Activated CD8-positive, alpha-beta T cell treated with anti-CD3 and anti-CD28 coated beads, Interleukin-2, amount 10 ng/mL, durations not matched to agents 7 days and 5 days (primary cell): ENCODE measurements at regions of chr11 and their contacts with region 1.

Region 1: GRCh38 chr11:125592305-125593112 is at the start of gene STT3A:
- DNase-seq: peak; percentile 98
- ATAC-seq: peak; percentile 98
- H3K4me3 Mint-ChIP-seq: peak within 1 kb of the TSS; percentile 93
- H3K27ac Mint-ChIP-seq: peak within 1 kb of the TSS; percentile 96
- H3K4me1 Mint-ChIP-seq: peaks cover 34% of the 10 kb centered on the region
- H3K27me3 Mint-ChIP-seq: no peaks in the 10 kb centered on the region
- total RNA-seq, gene STT3A: 103 to 114 TPM

Region 2: DNA sequence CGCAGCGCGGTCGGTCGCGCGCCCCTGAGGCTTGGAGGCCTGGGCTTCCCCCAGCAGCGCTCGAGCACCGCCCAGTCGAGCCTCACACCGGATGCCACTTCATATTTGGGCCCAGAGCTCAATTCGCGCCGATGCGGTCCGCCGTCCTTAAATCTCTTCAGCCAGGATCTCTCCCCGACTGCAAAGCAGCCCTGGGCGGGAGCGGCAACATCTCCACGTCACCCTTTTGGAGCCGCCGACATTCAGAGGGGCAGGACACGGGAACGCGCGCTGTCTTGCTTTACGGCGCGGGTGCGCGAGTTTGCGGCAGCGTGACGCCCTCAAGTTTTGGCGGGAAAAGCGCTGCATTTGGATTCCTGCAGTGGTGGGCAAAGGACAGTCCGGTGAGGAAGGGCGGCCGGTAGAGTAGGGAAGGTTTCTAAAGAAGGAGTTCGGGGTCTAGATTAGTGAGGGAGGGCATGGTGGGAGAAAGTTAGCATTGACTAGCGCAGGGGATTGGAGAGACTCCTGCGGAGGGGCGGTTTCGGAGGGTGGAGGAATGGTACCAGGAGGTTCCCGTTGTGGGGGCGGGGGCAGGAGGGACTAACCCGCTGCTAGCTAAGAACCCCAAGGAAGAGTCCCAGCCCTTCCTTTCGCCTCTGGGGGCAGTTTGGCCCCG is 33.2 kb after region 1 on chr11:
- CTCF ChIA-PET with region 1: interaction called, 16 read pairs
- POLR2A ChIA-PET with region 1: interaction called, 32 read pairs
- DNase-seq: peak; percentile 91
- ATAC-seq: peak; percentile 90
- H3K4me3 Mint-ChIP-seq: peak overlapping the region; percentile 90
- H3K27ac Mint-ChIP-seq: peak overlapping the region; percentile 97
- H3K4me1 Mint-ChIP-seq: peaks cover 29% of the 10 kb centered on the region
- H3K27me3 Mint-ChIP-seq: no peaks in the 10 kb centered on the region

Region 3: DNA sequence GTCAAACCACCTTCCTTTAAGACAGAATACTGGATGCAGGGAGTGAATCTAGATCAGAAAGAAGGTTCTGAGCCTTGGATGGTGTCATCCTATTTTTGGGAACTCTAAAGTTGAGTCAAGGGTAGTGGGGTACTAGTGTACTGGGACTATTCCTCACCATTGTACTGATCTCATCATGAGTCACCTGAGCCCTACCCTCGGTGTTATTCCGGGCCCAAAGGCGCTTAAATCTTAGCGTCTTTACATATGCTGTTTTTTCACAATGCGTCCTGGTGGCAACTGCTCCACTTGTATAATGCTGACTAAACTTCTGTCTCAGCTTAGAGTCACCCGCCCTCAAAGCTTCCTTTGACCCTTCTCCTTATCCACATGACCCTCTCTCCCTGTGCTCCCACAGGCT is 128.3 kb after region 1 on chr11:
- CTCF ChIA-PET with region 1: no interaction called
- POLR2A ChIA-PET with region 1: no interaction called
- DNase-seq: no peak
- ATAC-seq: no peak
- H3K4me3 Mint-ChIP-seq: no peak overlapping the region
- H3K27ac Mint-ChIP-seq: no peak overlapping the region
- H3K4me1 Mint-ChIP-seq: no peaks in the 10 kb centered on the region
- H3K27me3 Mint-ChIP-seq: peaks cover 14% of the 10 kb centered on the region

Region 4: DNA sequence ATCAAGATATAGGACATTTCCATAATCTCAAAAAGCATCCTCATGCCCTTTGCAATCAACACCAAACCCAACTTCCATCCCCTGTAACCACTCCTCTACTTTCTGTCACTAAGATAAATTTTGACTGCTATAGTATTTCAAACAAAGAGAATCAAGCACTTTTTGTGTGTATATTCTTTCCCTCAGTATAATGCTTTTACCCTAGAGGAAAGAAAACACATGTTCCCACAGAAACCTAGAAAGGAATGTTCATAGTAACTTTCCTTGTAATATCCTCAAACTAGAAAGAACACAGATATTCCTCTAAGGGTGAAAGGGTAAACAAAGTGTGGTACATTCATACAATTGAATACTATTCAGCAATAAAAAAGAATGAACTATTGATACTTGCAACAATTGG is 148.1 kb after region 1 on chr11:
- CTCF ChIA-PET with region 1: no interaction called
- POLR2A ChIA-PET with region 1: no interaction called
- DNase-seq: no peak
- ATAC-seq: no peak
- H3K4me3 Mint-ChIP-seq: no peak overlapping the region
- H3K27ac Mint-ChIP-seq: no peak overlapping the region
- H3K4me1 Mint-ChIP-seq: no peaks in the 10 kb centered on the region
- H3K27me3 Mint-ChIP-seq: peaks cover 28% of the 10 kb centered on the region

Region 5: GRCh38 chr11:125772834-125773505 is 180.5 kb after region 1 on chr11:
- CTCF ChIA-PET with region 1: no interaction called
- POLR2A ChIA-PET with region 1: no interaction called
- DNase-seq: no peak
- ATAC-seq: no peak
- H3K4me3 Mint-ChIP-seq: no peak overlapping the region
- H3K27ac Mint-ChIP-seq: no peak overlapping the region
- H3K4me1 Mint-ChIP-seq: no peaks in the 10 kb centered on the region
- H3K27me3 Mint-ChIP-seq: peaks cover 13% of the 10 kb centered on the region